Sigmoid colon (tissue), 7 donors: ENCODE measurements at regions of chr17 and their contacts with region 1.

Region 1: DNA sequence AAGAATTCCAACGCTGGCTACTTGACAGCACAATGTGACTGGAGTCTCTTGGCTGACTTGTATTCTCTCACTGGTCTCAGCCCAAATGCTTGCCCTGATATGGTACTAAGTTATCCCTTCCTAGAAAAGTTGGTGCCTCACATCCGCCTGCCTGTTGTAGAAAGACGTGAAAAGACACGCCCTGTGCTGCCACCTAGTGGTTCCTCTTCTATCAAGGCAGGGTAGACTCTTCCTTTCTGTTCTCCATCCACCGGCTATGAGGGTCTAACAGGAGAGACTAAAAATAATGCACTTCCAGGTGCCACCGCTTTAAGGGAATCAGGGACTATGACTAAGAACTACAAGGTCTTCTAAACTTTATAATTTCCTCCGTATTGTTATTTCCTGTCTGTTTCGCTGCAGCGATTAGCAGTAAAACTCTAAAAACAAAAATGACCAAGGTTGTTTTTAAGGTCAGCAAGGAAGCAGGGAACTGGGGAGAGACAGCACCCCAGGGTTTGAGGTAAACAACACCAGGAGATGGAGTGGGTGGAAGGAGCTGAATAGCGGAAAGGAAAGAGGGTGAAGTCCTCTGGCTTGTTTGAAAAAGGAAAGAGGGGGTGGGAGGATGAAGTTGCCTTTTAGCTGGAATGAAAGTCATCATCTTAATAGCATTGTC is 109.5 kb downstream of the YPEL2 start:
- DNase-seq: peak; percentile 96
- H3K4me3 ChIP-seq: peak overlapping the region in 1 of 4 donors; percentile 15
- H3K27ac ChIP-seq: peak overlapping the region; percentile 58 to 80 (median 76)
- H3K4me1 ChIP-seq: peaks cover 0 to 21% (median 16%) of the 10 kb centered on the region in 4 donors
- H3K27me3 ChIP-seq: no peaks in the 10 kb centered on the region
- CTCF ChIP-seq: peak; percentile 79 to 91 (median 89)
- EP300 ChIP-seq: no peak
- POLR2A ChIP-seq: no peak

Region 2: DNA sequence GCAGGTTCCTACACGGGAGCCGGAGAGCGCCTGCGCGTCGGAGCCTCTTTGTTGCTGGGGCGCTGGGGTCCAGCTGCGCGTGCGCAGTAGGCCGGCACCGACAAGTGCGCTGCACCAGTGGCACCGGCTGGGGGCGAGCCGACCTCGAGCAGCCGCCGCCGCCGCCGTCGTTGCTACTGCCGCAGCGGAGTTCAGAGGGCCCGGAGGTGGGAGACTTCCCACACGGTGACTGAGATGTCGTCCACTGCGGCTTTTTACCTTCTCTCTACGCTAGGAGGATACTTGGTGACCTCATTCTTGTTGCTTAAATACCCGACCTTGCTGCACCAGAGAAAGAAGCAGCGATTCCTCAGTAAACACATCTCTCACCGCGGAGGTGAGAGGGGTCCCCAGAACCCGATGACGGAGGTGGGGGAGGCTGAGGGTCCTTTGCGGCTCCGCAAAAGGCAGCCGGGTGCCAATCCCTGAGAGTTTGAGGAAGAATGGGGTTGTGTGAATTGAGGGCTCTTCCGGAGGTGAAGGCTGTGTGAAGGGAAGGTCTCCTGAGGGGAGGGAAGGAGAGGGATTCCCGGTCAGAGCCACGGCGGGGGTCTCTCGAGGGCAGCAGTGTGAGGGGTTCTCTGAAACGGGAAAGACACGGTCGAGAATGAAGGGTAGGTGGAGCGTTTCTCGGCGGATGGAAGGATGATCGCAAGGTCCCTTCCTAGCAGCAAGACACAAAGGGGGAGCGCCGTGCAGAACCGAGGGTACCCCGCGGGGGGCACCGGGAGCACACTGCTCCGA is 220.3 kb before region 1 on chr17 and contains the start of gene GDPD1:
- intact Hi-C with region 1: loop called (anchors 2 kb)
- DNase-seq: peak; percentile 98
- H3K4me3 ChIP-seq: peak within 1 kb of the TSS; percentile 56 to 87 (median 80)
- H3K27ac ChIP-seq: peak within 1 kb of the TSS; percentile 78 to 82 (median 80)
- H3K4me1 ChIP-seq: peaks cover 0 to 6% (median 2%) of the 10 kb centered on the region in 4 donors
- H3K27me3 ChIP-seq: no peaks in the 10 kb centered on the region
- CTCF ChIP-seq: peak; percentile 29 to 64 (median 50)
- EP300 ChIP-seq: no peak
- POLR2A ChIP-seq: no peak
- total RNA-seq, gene GDPD1: 2.5 to 4.3 (median 3.2) TPM

Region 3: DNA sequence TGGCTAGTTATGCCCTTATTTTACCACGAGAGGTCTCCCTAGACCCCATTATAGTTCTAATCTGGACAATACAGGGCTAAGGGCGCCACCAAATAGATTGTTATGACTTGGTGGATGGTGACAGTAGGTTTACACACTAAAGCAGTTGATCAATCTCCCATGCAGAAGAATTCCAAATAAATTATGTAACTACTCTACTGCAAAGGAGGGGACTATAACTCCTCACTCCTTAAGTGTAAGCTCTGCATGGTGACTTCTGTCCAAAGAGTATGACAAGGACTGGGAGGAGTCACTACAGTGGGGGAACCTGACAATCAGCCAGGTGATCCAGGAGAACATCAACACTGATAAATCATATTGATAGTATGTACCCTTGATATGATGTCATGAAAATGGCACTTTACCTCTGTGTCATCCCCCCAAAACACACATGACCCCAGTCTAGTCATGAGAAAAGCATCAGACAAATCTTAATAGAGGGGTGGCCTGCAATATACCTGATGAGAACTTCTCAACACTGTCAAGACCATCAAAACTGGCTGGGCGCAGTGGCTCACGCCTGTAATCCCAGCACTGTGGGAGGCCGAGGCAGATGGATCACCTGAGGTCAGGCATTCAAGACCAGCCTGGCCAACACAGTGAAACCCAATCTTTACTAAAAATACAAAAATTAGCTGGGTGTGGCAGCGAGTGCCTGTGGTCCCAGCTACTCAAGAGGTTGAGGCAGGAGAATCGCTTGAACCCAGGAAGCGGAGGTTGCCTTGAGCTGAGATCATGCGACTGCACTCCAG is 129.6 kb before region 1 on chr17:
- intact Hi-C with region 1: loop called (anchors 1 kb)
- DNase-seq: no peak
- H3K4me3 ChIP-seq: no peak overlapping the region
- H3K27ac ChIP-seq: no peak overlapping the region
- H3K4me1 ChIP-seq: peaks cover 0 to 8% (median 0%) of the 10 kb centered on the region in 4 donors
- H3K27me3 ChIP-seq: no peaks in the 10 kb centered on the region
- CTCF ChIP-seq: peak in 3 of 4 experiments; percentile 72 to 83 (median 76)
- EP300 ChIP-seq: no peak
- POLR2A ChIP-seq: no peak